GM23248 (cell line): ENCODE measurements at regions of chr9 and their contacts with region 1.

Region 1: DNA sequence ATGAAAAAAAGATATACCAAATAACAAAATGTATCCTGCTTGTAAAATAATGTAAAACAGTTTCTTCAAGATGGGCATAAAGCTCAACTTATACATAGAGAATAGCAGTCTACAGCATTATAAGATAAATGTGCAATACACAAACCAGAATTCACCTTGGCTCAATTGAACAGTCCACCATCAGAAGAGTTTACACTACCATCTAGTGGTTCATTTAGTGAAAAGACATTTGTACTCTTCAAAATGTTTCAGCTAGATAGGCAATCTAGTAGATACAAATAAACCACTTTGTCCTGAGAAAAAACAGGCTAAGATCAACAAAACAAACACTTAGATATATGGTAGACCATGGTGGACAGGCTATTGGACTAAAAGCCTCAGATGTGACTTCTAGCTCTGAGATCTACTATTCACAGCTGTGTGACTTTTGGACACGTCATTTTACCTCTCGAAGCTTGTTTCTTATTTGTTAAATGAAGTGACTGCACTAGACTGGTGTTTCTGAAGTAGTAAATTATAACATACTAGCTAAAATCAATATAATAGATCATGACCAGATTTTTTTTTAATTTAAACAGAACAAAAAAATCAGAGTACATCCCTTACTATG is 22.1 kb upstream of the TPD52L3 start:
- DNase-seq: peak; percentile 70
- H3K4me3 ChIP-seq: no peak overlapping the region
- H3K27ac ChIP-seq: no peak overlapping the region
- H3K4me1 ChIP-seq: 0 out of 2 replicates have a peak, but pooled peaks cover 6% of the 10 kb centered on the region
- H3K27me3 ChIP-seq: no peaks in the 10 kb centered on the region

Region 2: DNA sequence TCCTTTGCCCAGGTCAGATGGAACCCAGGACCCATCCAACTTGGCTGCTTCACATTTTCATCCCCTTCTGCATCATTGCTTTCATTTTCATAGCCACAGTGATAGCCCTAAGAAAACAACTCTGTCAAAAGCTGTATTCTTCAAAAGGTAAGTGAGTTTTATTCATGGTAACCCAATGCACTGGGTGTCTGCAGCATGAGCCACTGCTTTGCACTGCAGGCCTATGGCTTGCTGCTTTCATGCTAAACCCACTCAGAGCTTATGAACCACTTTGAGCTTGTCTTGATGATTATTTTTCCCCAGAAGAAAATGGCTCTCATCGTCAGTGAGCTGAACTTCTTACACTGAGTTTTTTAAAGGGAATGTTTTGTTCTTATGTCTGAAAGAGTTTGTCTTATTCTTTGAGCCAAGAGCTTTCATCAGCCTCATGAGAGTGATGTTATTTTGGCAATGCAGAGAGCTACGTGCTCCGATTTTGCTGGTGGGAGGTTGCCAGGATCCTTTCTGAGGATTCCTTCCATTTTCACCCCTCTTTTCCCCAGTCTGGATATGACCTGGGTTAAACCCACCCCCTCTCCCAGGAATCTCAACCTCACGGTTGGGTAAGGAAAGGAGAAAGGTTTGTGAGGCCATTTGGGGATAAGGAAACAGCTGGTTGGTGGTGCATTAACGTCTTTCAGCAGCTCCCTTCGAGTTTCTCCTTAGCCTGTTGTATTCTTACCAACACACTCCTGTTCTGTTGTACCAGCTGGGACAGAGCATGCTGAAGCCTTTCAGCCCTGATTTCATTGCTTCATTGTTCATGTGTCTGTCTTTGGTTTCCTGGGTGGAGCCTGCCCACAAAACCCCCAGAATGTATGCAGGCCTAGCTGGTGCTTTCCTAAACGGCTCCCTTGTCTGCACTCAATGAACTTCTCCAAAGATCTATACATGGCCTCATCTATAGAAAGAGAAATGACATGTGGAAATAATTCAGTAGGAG is 748.2 kb before region 1 on chr9:
- in situ Hi-C with region 1: no loop called
- DNase-seq: no peak
- H3K4me3 ChIP-seq: no peak overlapping the region
- H3K27ac ChIP-seq: no peak overlapping the region
- H3K4me1 ChIP-seq: peaks cover 24% of the 10 kb centered on the region
- H3K27me3 ChIP-seq: no peaks in the 10 kb centered on the region

Region 3: DNA sequence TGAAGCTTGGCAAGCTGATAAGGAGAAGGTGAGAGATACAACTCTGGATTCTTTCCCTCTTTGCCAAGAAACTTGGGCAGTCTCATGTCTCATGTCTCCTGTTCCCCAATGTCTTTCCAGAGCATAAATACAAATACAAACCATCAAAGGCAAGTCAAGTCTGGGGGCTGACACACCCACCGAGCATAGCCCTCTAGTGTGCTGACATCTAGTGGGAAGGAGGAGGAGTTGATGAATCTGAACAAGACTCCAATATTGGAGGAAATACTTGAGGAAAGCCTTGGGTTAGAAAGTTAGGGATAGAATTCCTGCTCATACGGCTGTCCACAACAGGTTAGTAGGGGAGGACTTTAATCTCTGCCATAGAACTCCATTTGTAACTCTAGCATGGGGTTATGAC is 406.8 kb before region 1 on chr9:
- in situ Hi-C with region 1: loop called (anchors 10 kb)
- DNase-seq: no peak
- H3K4me3 ChIP-seq: no peak overlapping the region
- H3K27ac ChIP-seq: no peak overlapping the region
- H3K4me1 ChIP-seq: no peaks in the 10 kb centered on the region
- H3K27me3 ChIP-seq: no peaks in the 10 kb centered on the region

Region 4: DNA sequence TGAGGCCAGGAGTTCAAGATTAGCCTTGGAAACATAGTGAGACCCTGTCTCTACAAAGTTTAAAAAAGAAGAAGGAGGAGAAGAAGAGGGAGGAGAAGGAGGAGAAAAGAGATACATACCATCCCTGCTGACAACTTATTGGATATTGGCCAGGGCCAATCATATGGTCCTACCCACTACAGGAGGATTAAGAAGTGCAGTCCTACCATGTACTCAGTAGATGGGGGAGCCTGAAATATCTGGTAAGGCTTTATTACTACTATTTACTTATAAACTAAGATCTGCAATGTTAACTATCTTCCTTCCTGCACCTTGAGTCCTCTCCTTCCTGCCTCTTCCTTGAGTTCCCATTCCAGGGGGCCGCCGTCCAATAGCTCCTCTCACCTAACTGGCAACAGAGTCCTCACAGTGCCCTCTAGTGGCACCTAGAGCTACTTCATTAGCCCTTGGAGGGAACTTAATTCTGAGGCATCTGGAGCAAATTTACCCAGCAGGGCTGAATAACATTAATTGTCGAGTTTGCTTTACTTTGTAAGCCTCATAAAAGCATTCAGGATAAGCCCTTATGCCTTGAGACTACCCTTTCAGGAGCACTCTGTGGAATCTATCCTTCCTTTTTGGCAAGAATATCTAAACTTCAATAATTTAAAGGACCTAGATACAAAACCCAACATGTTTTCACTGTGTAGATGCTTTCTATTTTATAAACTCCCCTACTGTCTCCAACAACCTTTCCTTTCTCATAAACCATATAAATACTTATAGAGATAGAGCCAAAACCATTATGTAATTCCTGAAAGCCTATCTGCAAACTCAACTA is 251.6 kb before region 1 on chr9:
- in situ Hi-C with region 1: loop called (anchors 5 kb)
- DNase-seq: peak; percentile 83
- H3K4me3 ChIP-seq: no peak overlapping the region
- H3K27ac ChIP-seq: no peak overlapping the region
- H3K4me1 ChIP-seq: peaks cover 15% of the 10 kb centered on the region
- H3K27me3 ChIP-seq: no peaks in the 10 kb centered on the region

Region 5: GRCh38 chr9:6931913-6932312 is 625.9 kb after region 1 on chr9:
- in situ Hi-C with region 1: no loop called
- DNase-seq: peak; percentile 83
- H3K4me3 ChIP-seq: no peak overlapping the region
- H3K27ac ChIP-seq: peak overlapping the region; percentile 31; the same call in 1 of the 2 replicates
- H3K4me1 ChIP-seq: peaks cover 32% of the 10 kb centered on the region
- H3K27me3 ChIP-seq: no peaks in the 10 kb centered on the region